ENCODE measurements at regions of chr7 and their contacts with region 1.

Region 1: DNA sequence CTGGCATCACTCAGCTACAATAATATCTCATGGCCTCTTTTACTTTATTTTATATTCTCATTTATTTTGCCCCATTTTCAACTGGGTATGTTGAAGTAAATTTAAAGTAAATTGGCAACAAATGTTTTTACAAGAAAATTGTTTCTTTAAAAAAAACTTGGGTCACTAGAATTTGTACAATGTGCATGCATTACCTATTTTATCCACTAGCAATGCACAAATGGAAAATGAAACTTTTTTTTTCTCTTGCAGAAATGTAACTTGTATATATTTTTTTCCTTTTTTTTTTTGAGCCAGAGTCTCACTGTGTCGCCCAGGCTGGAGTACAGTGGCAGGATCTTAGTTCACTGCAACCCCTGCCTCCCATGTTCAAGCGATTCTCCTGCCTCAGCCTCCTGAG is 10.3 kb upstream of the H2AZ2 start:
- DNase-seq: no peak
- ATAC-seq: no peak
- H3K4me3 ChIP-seq: no peak overlapping the region
- H3K27ac ChIP-seq: no peak overlapping the region
- H3K4me1 ChIP-seq: no peaks in the 10 kb centered on the region
- H3K27me3 ChIP-seq: no peaks in the 10 kb centered on the region
- CTCF ChIP-seq: no peak

Region 2: DNA sequence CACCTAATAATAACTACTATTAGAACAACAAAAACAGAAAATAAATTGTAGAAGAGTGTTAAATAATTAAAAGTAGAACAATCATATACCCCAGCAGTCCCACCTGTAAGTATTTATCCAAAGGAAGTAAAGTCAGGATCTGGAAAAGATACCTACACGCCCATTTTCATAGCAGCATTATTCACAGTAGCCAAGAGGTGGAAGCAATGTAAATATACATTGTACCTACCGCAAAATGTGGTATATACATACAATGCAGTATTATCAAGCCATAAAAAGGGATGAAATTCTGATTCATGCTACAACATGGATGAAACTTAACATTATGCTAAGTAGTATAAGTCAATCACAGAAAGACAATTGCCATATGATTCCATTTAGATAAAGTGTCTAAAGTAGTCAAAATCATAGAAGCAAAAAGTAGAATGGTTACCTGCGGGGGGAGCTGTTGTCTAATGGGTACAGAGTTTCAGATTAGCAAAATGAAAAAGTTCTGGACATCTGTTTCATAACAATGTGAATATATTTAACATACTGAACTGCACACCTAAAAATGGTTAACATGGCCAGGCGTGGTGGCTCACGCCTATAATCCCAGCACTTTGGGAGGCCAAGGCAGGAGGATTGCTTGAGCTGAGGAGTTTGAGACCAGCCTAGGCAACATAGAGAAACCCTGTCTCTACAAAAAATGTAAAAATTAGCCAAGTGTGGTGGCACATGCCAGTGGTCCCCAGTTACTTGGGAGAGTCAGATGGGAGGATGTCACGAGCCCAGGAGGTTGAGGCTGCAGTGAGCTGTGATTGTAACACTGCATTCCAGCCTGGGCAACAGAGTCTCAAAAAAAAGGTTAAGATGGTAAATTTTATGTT is 270.1 kb before region 1 on chr7:
- CTCF ChIA-PET with region 1: no interaction called
- POLR2A ChIA-PET with region 1: no interaction called
- in situ Hi-C with region 1: no loop called
- intact Hi-C with region 1: no loop called
- DNase-seq: peak; percentile 75
- ATAC-seq: peak; percentile 88
- H3K4me3 ChIP-seq: no peak overlapping the region
- H3K27ac ChIP-seq: no peak overlapping the region
- H3K4me1 ChIP-seq: peaks cover 5% of the 10 kb centered on the region; the same call in 1 of the 2 replicates
- H3K27me3 ChIP-seq: no peaks in the 10 kb centered on the region
- CTCF ChIP-seq: peak; percentile 84

Region 3: GRCh38 chr7:44921607-44922359 is 63.6 kb after region 1 on chr7:
- CTCF ChIA-PET with region 1: no interaction called
- POLR2A ChIA-PET with region 1: interaction called, 6 read pairs
- in situ Hi-C with region 1: no loop called
- intact Hi-C with region 1: loop called (anchors 2 kb)
- DNase-seq: peak; percentile 47
- ATAC-seq: peak; percentile 92
- H3K4me3 ChIP-seq: no peak overlapping the region
- H3K27ac ChIP-seq: no peak overlapping the region
- H3K4me1 ChIP-seq: no peaks in the 10 kb centered on the region
- H3K27me3 ChIP-seq: no peaks in the 10 kb centered on the region
- CTCF ChIP-seq: peak; percentile 90

Region 4: GRCh38 chr7:44962483-44963251 is 104.5 kb after region 1 on chr7:
- CTCF ChIA-PET with region 1: interaction called, 6 read pairs
- POLR2A ChIA-PET with region 1: no interaction called
- in situ Hi-C with region 1: no loop called
- intact Hi-C with region 1: loop called (anchors 5 kb)
- DNase-seq: no peak
- ATAC-seq: peak; percentile 69
- H3K4me3 ChIP-seq: peak overlapping the region; percentile 36 to 45
- H3K27ac ChIP-seq: no peak overlapping the region
- H3K4me1 ChIP-seq: peaks cover 3% of the 10 kb centered on the region; the same call in 1 of the 2 replicates
- H3K27me3 ChIP-seq: no peaks in the 10 kb centered on the region
- CTCF ChIP-seq: no peak; the same call in 1 of the 2 replicates